ENCODE measurements at regions of chr11 and their contacts with region 1.

Region 1: GRCh38 chr11:19769820-19770219 is 57.2 kb downstream of the NAV2 start:
- DNase-seq: no peak
- H3K4me3 ChIP-seq: no peak overlapping the region
- H3K4me1 ChIP-seq: no peaks in the 10 kb centered on the region; the same call in 1 of the 2 replicates
- H3K27me3 ChIP-seq: peaks cover 5% of the 10 kb centered on the region; the same call in 1 of the 2 replicates

Region 2: DNA sequence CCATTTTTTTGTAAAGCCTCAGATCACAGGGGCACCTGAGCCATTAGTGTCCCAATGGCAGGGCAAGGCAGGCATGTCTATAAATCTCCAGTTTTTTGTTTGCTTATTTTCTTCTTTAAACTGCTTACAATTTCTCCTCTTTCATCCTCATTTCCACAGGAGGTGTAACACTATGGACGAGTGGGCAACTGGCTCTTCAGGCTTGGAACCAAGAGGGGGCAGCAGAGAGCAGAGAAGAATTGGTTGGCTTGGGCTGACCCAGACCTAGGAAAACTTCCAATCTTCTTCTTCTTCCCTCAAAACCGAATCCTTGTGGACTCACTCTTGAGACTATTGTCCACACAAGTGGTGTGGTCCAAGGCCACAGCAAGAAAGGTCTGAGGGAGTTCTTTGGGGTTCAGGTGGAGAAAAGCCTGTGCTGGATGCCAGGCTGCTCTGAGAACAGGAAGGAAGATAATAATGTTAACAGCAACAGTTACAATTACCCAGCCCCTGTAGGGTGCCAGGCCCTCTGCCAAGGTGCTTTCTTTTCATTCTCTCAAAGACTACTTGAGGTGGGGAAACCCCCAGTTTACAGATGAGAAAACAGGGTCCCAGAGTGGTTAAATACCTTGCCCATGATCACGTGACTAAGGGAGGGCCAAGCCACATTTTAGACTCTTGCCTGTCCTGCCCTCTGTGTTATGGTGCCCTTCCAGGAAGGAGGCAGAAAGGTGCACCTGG is 458.4 kb before region 1 on chr11:
- in situ Hi-C with region 1: loop called (anchors 25 kb)
- DNase-seq: peak; percentile 29 to 85
- H3K4me3 ChIP-seq: no peak overlapping the region
- H3K4me1 ChIP-seq: no peaks in the 10 kb centered on the region
- H3K27me3 ChIP-seq: peaks cover 9% of the 10 kb centered on the region

Region 3: GRCh38 chr11:19460718-19461405 is 309.0 kb before region 1 on chr11:
- in situ Hi-C with region 1: no loop called
- DNase-seq: no peak
- H3K4me3 ChIP-seq: no peak overlapping the region
- H3K4me1 ChIP-seq: peaks cover 6% of the 10 kb centered on the region
- H3K27me3 ChIP-seq: no peaks in the 10 kb centered on the region

Region 4: GRCh38 chr11:19890308-19890707 is 120.5 kb after region 1 on chr11:
- in situ Hi-C with region 1: no loop called
- DNase-seq: no peak
- H3K4me3 ChIP-seq: no peak overlapping the region
- H3K4me1 ChIP-seq: no peaks in the 10 kb centered on the region
- H3K27me3 ChIP-seq: peaks cover 9% of the 10 kb centered on the region

Region 5: DNA sequence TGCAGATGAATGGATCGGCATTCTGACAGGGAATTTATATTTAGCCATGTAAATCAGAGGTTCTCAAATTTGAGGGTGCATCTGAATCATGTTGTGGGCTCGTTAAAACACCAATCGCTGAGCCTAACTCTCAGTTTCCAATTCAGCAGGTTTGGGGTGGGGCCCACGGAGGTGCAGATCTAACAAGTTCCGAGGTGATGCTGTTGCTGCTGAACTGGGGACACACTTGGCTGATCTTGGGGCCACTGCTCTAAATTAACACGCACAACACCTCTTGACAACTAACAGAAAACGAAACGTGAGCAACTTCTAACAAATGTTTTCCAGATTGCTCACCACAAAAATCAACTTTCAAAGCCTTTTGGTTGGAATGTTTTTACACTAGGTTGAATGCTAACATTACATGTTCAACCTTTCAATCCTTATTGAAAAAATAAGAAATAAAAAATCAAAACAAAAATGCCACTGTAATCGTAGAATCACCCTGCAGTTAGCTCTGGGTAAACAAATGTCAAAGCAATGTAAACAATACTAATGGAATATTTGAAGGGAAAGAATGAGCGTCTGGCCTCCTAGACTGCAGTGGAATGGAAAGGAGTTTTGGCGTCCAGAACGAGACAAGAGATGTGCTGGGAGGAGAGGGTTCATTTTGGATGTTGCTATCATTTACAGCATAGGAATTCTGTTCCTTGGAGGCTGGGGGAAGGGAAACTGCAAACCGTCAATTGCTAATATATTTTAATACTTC is 761.3 kb after region 1 on chr11:
- in situ Hi-C with region 1: no loop called
- DNase-seq: no peak
- H3K4me3 ChIP-seq: no peak overlapping the region
- H3K4me1 ChIP-seq: no peaks in the 10 kb centered on the region
- H3K27me3 ChIP-seq: no peaks in the 10 kb centered on the region